T-cell (primary cell): ENCODE measurements at regions of chr13 and their contacts with region 1.

Region 1: GRCh38 chr13:33218001-33218400 is 67.6 kb downstream of the STARD13 start:
- DNase-seq: no peak
- ATAC-seq: no peak
- H3K4me3 ChIP-seq: no peak overlapping the region
- H3K4me3 Mint-ChIP-seq: no peak overlapping the region
- H3K27ac ChIP-seq: no peak overlapping the region
- H3K27ac Mint-ChIP-seq: no peak overlapping the region
- H3K4me1 ChIP-seq: no peaks in the 10 kb centered on the region
- H3K4me1 Mint-ChIP-seq: peaks cover 0 to 2% (median 0%) of the 10 kb centered on the region in 3 donors
- H3K27me3 ChIP-seq: no peaks in the 10 kb centered on the region
- H3K27me3 Mint-ChIP-seq: peaks cover 0 to 4% of the 10 kb centered on the region in 2 donors

Region 2: GRCh38 chr13:33228648-33229445 is 10.8 kb after region 1 on chr13:
- CTCF ChIA-PET with region 1: no interaction called
- POLR2A ChIA-PET with region 1: no interaction called
- DNase-seq: peak in 5 of 35 experiments; percentile 2 to 62 (median 10)
- ATAC-seq: peak in 3 of 4 experiments; percentile 44 to 50 (median 49)
- H3K4me3 ChIP-seq: no peak overlapping the region
- H3K4me3 Mint-ChIP-seq: no peak overlapping the region
- H3K27ac ChIP-seq: no peak overlapping the region
- H3K27ac Mint-ChIP-seq: no peak overlapping the region
- H3K4me1 ChIP-seq: no peaks in the 10 kb centered on the region
- H3K4me1 Mint-ChIP-seq: peaks cover 3 to 4% (median 3%) of the 10 kb centered on the region in 3 donors
- H3K27me3 ChIP-seq: no peaks in the 10 kb centered on the region
- H3K27me3 Mint-ChIP-seq: peaks cover 0 to 4% of the 10 kb centered on the region in 2 donors

Region 3: DNA sequence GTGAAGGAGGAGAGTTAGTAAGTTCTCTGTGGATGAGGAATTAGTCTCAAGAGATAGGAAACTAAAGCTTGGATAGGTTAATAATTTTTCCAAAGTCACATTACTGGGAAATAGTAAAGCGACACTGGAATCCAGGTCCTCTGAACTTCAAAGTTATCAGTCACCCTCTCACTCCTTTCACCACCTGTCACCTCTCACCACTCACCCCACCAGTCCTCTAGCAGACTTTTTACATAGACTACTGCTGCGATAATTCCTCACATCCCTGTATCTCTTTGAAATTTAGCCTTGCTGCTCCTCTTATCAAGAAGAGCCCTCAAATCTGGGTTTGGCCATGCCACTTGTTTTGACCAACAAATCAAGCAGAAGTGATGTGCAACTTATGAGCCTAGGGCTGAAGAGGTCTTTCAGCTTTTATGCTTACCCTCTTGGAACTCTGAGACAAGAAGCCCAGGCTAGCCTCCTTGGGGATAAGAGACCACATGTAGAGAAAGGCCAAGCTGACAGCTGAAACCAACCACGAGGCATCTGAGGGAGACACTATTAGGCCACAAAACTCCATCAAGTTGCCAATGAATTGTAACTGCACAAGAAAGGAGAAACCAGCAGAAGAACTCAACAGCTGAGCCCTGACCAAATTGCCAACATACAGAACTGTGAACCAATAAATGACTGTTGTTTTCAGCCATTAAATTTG is 26.4 kb after region 1 on chr13:
- CTCF ChIA-PET with region 1: interaction called in 1 of 2 experiments, 10 read pairs
- POLR2A ChIA-PET with region 1: no interaction called
- DNase-seq: no peak
- ATAC-seq: no peak
- H3K4me3 ChIP-seq: no peak overlapping the region
- H3K4me3 Mint-ChIP-seq: no peak overlapping the region
- H3K27ac ChIP-seq: no peak overlapping the region
- H3K27ac Mint-ChIP-seq: no peak overlapping the region
- H3K4me1 ChIP-seq: no peaks in the 10 kb centered on the region
- H3K4me1 Mint-ChIP-seq: no peaks in the 10 kb centered on the region
- H3K27me3 ChIP-seq: no peaks in the 10 kb centered on the region
- H3K27me3 Mint-ChIP-seq: peaks cover 2 to 18% of the 10 kb centered on the region in 2 donors

Region 4: DNA sequence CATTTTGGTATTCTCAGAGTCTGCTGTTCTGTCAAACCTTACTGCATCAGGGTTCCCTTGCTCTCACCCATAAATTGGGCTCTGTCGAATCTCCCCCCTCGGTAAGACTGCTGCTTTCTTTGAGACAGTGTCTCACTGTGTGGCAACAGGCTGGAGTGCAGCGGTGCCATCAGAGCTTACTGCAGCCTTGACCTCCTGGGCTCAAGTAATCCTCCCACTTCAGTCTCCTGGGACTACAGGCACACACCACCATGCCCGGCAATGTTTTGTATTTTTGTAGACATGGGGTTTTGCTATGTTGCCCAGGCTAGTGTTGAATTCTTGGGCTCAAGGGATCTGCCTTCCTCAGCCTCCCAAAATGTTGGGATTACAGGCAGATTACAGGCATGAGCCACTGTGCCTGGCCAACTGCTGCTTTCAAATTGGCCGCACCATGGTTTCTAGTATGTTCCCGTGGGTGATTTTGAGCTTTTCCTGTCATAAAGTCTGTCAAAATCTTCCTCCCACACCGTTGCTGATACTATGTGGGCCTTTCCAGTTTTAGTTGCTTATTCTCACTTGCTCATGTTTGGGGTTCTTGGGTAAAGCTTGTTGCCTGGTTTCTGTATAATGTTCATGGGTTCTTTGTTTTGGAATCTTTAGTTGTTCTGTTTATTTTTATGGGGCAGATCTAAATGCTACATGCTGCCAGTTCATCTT is 610.6 kb after region 1 on chr13:
- CTCF ChIA-PET with region 1: no interaction called
- POLR2A ChIA-PET with region 1: no interaction called
- DNase-seq: no peak
- ATAC-seq: no peak
- H3K4me3 ChIP-seq: no peak overlapping the region
- H3K4me3 Mint-ChIP-seq: no peak overlapping the region
- H3K27ac ChIP-seq: no peak overlapping the region
- H3K27ac Mint-ChIP-seq: no peak overlapping the region
- H3K4me1 ChIP-seq: no peaks in the 10 kb centered on the region
- H3K4me1 Mint-ChIP-seq: no peaks in the 10 kb centered on the region
- H3K27me3 ChIP-seq: no peaks in the 10 kb centered on the region
- H3K27me3 Mint-ChIP-seq: no peaks in the 10 kb centered on the region